ENCODE measurements at regions of chr16 and their contacts with region 1.

Region 1: GRCh38 chr16:87459833-87460232 is 33.0 kb downstream of the ZCCHC14 start:
- DNase-seq: no peak

Region 2: DNA sequence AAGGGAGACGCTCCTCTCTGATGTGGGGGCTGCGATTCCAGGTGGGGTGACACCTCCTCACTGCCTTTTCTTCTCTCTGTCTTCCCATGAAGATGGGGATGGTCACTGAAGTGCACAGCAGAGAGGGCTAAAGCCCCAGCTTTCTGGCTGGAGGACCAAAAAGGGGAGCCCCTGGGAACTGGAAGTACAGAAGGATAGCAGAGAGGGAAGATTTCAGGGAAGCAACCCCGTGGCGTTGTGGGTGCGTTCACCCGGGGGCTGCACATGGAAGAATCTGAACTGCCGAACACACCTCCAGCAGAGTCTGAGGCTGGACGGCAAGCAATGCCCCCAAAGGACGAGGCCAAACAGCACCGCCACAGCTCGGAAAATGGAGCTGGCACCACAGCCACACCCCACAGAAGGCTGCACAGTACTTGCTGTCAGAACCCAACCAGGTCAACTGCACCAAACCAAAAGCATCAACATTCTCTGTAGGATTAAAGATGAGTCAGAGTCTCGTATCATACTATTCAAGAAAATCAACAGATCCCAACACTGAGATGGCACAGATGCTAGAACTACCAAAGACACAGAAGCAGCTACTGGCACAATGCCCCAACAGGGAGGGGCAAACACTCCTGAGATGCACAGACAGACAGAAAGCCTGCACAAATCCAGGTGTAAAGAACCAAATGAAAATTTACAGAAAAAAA is 17.8 kb before region 1 on chr16:
- intact Hi-C with region 1: loop called in 1 of 2 experiments (anchors 1 kb)
- DNase-seq: peak; percentile 54

Region 3: GRCh38 chr16:89343501-89344457 is 1883.9 kb after region 1 on chr16:
- intact Hi-C with region 1: no loop called
- DNase-seq: no peak

Measured in posterior vena cava (tissue), 2 donors.